CD14-positive monocyte (primary cell): ENCODE measurements at regions of chr2 and their contacts with region 1.

Region 1: GRCh38 chr2:200703127-200703925 is 108.4 kb upstream of the BZW1 start:
- DNase-seq: peak; percentile 30 to 54 (median 49)
- H3K4me3 ChIP-seq: no peak overlapping the region
- H3K4me3 Mint-ChIP-seq: no peak overlapping the region
- H3K27ac ChIP-seq: no peak overlapping the region
- H3K27ac Mint-ChIP-seq: peak overlapping the region in 2 of 7 donors; percentile 2 to 11
- H3K4me1 ChIP-seq: peaks cover 0 to 9% of the 10 kb centered on the region in 2 donors
- H3K4me1 Mint-ChIP-seq: peaks cover 15% of the 10 kb centered on the region
- H3K27me3 ChIP-seq: no peaks in the 10 kb centered on the region
- H3K27me3 Mint-ChIP-seq: peaks cover 0 to 4% (median 0%) of the 10 kb centered on the region in 3 donors
- CTCF ChIP-seq: peak; percentile 74

Region 2: DNA sequence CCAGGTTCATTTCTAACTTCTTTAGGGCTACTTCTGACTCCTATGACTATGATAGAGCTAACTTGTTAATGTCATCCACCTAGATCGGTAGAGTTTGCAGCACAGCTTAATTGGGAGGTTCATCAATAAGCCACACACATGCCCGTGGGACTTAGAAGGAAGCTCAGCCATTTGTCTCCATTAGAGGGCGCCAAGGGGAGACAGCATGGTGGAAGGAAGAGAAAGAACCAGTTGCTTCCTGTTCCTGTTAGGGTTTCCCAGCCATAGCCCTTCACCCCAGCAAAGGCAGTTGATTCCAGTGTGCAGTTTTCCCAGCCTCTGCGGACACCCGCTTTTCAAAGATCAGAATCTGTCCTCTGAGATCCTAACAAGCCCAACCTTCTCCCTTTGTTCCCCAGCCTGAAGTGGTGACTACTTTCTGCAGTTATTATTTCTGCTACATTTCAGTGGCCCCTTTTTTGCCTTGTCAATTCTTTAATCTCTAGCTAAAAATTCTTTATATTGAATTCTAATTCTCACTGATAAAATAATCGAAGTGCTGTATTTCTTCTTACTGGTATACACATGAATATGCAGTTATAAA is 717.6 kb before region 1 on chr2:
- intact Hi-C with region 1: loop called in 1 of 2 experiments (anchors 10 kb)
- DNase-seq: peak; percentile 45 to 67 (median 48)
- H3K4me3 ChIP-seq: no peak overlapping the region
- H3K4me3 Mint-ChIP-seq: no peak overlapping the region
- H3K27ac ChIP-seq: no peak overlapping the region
- H3K27ac Mint-ChIP-seq: peak overlapping the region in 1 of 7 donors; percentile 18
- H3K4me1 ChIP-seq: no peaks in the 10 kb centered on the region
- H3K4me1 Mint-ChIP-seq: peaks cover 2% of the 10 kb centered on the region
- H3K27me3 ChIP-seq: no peaks in the 10 kb centered on the region
- H3K27me3 Mint-ChIP-seq: peaks cover 0 to 3% (median 2%) of the 10 kb centered on the region in 3 donors
- CTCF ChIP-seq: peak; percentile 68

Region 3: GRCh38 chr2:200578778-200579177 is 124.5 kb before region 1 on chr2:
- intact Hi-C with region 1: loop called (anchors 5 kb)
- DNase-seq: peak; percentile 30 to 41 (median 38)
- H3K4me3 ChIP-seq: no peak overlapping the region
- H3K4me3 Mint-ChIP-seq: no peak overlapping the region
- H3K27ac ChIP-seq: no peak overlapping the region
- H3K27ac Mint-ChIP-seq: no peak overlapping the region
- H3K4me1 ChIP-seq: no peaks in the 10 kb centered on the region
- H3K4me1 Mint-ChIP-seq: no peaks in the 10 kb centered on the region
- H3K27me3 ChIP-seq: no peaks in the 10 kb centered on the region
- H3K27me3 Mint-ChIP-seq: no peaks in the 10 kb centered on the region
- CTCF ChIP-seq: peak; percentile 57